ENCODE measurements at regions of chr11 and their contacts with region 1.

Region 1: DNA sequence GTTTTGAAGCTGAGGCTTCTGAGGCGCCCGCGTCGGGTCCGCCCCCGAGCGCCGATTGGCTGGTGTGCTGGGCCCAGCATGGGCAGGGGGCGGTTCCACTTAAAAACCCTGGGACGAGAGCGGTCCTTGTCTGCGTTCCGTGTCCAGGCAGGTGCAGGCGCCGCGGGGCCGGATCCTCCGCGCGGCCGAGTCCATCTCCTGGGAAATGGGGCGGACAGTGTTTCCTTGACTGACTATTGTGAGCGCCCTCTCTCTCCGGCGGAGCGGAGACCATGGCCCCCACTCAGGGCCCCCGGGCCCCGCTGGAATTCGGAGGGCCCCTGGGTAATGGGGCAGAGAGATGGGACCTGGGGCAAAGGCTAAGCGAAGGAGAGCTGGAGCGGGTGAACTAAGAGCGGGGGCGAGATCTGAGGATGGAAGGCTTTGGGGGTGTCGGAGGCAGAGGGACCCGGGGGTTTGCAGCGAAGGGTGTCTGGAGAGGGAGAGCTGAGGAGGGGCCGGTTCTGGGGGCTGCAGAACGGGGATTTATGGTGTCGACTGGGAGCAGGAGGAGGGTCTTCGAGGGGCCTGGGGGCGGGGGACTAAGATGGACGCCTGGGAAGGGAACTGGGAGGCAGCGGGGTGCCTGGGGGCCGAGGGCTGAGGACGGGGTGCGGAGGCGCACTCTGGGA is at the start of gene TM7SF2:
- DNase-seq: peak; percentile 85 to 95
- H3K4me3 ChIP-seq: peak within 1 kb of the TSS; percentile 76 to 90 (median 85)
- H3K27ac ChIP-seq: peak within 1 kb of the TSS; percentile 42; the same call in 1 of the 2 replicates
- H3K4me1 ChIP-seq: peaks cover 2 to 26% (median 19%) of the 10 kb centered on the region in 4 experiments
- H3K27me3 ChIP-seq: no peaks in the 10 kb centered on the region
- CTCF ChIP-seq: no peak
- EP300 ChIP-seq: no peak
- POLR2A ChIP-seq: peak in 1 of 2 experiments; percentile 91; a peak in 2 of 3 replicates
- RAD21 ChIP-seq: no peak
- total RNA-seq, gene TM7SF2: 40.1 and 42.4 TPM in 2 replicates

Region 2: GRCh38 chr11:65003282-65003681 is 108.6 kb before region 1 on chr11:
- CTCF ChIA-PET with region 1: no interaction called
- POLR2A ChIA-PET with region 1: no interaction called
- DNase-seq: no peak
- H3K4me3 ChIP-seq: no peak overlapping the region
- H3K27ac ChIP-seq: no peak overlapping the region
- H3K4me1 ChIP-seq: no peaks in the 10 kb centered on the region
- H3K27me3 ChIP-seq: no peaks in the 10 kb centered on the region
- CTCF ChIP-seq: no peak
- EP300 ChIP-seq: no peak
- POLR2A ChIP-seq: no peak
- RAD21 ChIP-seq: no peak

Region 3: DNA sequence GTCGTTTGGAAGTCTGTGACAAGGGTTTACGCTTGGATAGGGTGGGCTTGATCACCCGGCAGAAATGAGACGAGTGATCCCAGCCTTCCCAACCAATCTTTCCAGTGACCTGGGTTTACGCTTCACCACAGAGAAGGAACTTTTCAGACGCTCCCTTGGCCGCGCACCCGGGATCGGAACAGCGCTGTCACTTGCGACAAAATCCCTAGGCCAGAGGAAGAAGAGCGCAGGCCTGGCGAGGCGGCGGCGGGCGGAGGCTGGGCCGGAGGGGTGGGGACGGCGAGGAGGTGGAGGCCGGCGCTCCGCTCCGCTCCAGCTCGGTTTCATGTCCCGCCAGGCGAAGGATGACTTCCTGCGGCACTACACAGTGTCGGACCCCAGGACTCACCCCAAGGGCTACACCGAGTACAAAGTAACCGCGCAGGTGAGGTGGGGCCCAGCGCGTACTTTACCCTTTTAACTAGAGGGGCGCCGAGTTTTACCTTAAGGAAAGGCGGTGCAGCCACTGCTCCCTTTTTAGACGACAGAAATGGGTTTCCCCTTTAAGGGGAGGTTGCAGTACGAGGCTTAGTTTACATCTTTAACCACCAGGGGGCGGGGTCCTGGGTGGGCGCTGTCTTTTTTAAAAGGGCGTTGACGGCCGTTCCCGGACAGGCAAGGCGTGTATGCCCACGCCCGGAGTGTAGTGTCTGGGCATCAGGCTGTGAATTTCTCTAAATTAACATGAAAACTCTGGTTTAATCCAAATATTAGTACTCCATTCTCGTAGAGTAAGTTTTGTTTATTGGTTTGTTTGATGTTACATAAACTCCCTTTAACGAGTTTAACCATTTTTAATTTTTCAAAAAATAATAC is 84.4 kb before region 1 on chr11 and contains the start of gene SNX15:
- CTCF ChIA-PET with region 1: interaction called, 14 read pairs
- POLR2A ChIA-PET with region 1: interaction called, 3 read pairs
- DNase-seq: peak; percentile 68 to 95
- H3K4me3 ChIP-seq: peak within 1 kb of the TSS; percentile 31 to 65 (median 58)
- H3K27ac ChIP-seq: no peak within 1 kb of the TSS
- H3K4me1 ChIP-seq: peaks cover 0 to 4% (median 2%) of the 10 kb centered on the region in 4 experiments; a peak in 5 of 7 replicates
- H3K27me3 ChIP-seq: no peaks in the 10 kb centered on the region
- CTCF ChIP-seq: peak; percentile 13 to 49 (median 44)
- EP300 ChIP-seq: 0 out of 3 replicates have a peak, but pooled peaks of 1 of the 2 experiments have one; percentile 31
- POLR2A ChIP-seq: no peak
- RAD21 ChIP-seq: peak; percentile 16 to 28; a peak in 2 of 4 replicates
- total RNA-seq, gene SNX15: 18.3 and 19.6 TPM in 2 replicates

Region 4: GRCh38 chr11:65078151-65078550 is 33.7 kb before region 1 on chr11:
- CTCF ChIA-PET with region 1: interaction called, 11 read pairs
- POLR2A ChIA-PET with region 1: interaction called, 11 read pairs
- DNase-seq: peak in 1 of 2 experiments; percentile 86
- H3K4me3 ChIP-seq: no peak overlapping the region
- H3K27ac ChIP-seq: no peak overlapping the region
- H3K4me1 ChIP-seq: peaks cover 0 to 6% (median 2%) of the 10 kb centered on the region in 4 experiments; a peak in 4 of 7 replicates
- H3K27me3 ChIP-seq: no peaks in the 10 kb centered on the region
- CTCF ChIP-seq: peak; percentile 79 to 92 (median 88)
- EP300 ChIP-seq: no peak
- POLR2A ChIP-seq: peak in 1 of 2 experiments; percentile 15; a peak in 2 of 3 replicates
- RAD21 ChIP-seq: peak; percentile 60 to 68

Region 5: DNA sequence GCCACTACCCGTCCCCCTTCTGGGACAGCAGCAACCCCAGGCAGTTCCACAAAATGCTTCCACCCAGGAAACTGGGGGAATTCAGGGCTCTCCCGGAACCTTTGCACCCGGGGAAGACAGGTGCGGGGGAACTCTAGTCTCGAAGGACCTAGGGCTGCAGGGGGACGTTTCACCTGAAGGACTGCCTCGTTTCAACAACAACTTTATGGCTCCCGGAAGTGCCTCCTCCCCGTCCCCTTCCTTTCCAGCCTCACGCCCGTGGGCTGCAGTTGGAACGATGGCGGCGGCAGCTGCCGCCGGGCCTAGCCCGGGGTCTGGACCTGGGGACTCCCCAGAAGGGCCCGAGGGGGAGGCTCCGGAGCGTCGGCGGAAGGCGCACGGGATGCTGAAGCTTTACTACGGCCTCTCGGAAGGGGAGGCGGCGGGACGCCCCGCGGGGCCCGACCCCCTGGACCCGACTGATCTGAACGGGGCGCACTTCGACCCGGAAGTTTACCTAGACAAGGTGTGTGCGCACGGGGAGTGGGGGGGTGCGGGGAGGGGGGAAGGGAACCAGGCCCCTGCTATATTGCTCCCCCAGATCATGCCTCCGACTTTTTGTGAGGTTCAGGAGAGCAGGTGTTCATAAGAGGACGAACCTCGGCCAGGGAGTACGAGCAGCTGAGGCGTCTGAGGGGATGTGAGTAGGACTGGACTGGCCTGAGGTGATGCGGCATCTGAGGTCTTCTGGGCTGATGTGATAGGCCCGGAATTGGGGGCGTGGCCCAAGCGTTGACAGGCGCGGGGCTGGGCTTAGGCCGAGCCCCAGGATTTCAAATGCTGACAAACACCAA is 15.7 kb before region 1 on chr11 and contains the start of gene VPS51:
- CTCF ChIA-PET with region 1: interaction called, 85 read pairs
- POLR2A ChIA-PET with region 1: interaction called, 186 read pairs
- DNase-seq: peak; percentile 70 to 93
- H3K4me3 ChIP-seq: peak within 1 kb of the TSS; percentile 78 to 88 (median 78)
- H3K27ac ChIP-seq: peak within 1 kb of the TSS; percentile 67; the same call in 1 of the 2 replicates
- H3K4me1 ChIP-seq: peaks cover 0 to 6% (median 4%) of the 10 kb centered on the region in 4 experiments; a peak in 6 of 7 replicates
- H3K27me3 ChIP-seq: no peaks in the 10 kb centered on the region
- CTCF ChIP-seq: no peak
- EP300 ChIP-seq: peak in 1 of 2 experiments; percentile 86; a peak in 2 of 3 replicates
- POLR2A ChIP-seq: peak; percentile 75 to 86
- RAD21 ChIP-seq: no peak
- total RNA-seq, gene VPS51: 97.4 and 108 TPM in 2 replicates

Region 6: GRCh38 chr11:65180877-65181568 is 69.1 kb after region 1 on chr11:
- CTCF ChIA-PET with region 1: interaction called, 13 read pairs
- POLR2A ChIA-PET with region 1: interaction called, 35 read pairs
- DNase-seq: peak in 1 of 2 experiments; percentile 90
- H3K4me3 ChIP-seq: peak overlapping the region; percentile 65 to 82 (median 74)
- H3K27ac ChIP-seq: no peak overlapping the region
- H3K4me1 ChIP-seq: peaks cover 7 to 32% (median 21%) of the 10 kb centered on the region in 4 experiments
- H3K27me3 ChIP-seq: no peaks in the 10 kb centered on the region
- CTCF ChIP-seq: peak; percentile 51 to 74 (median 69)
- EP300 ChIP-seq: no peak
- POLR2A ChIP-seq: peak in 1 of 2 experiments; percentile 52; a peak in 2 of 3 replicates
- RAD21 ChIP-seq: peak; percentile 65 to 71

Measured in H1 (cell line).